ENCODE measurements at regions of chr11 and their contacts with region 1.

Region 1: DNA sequence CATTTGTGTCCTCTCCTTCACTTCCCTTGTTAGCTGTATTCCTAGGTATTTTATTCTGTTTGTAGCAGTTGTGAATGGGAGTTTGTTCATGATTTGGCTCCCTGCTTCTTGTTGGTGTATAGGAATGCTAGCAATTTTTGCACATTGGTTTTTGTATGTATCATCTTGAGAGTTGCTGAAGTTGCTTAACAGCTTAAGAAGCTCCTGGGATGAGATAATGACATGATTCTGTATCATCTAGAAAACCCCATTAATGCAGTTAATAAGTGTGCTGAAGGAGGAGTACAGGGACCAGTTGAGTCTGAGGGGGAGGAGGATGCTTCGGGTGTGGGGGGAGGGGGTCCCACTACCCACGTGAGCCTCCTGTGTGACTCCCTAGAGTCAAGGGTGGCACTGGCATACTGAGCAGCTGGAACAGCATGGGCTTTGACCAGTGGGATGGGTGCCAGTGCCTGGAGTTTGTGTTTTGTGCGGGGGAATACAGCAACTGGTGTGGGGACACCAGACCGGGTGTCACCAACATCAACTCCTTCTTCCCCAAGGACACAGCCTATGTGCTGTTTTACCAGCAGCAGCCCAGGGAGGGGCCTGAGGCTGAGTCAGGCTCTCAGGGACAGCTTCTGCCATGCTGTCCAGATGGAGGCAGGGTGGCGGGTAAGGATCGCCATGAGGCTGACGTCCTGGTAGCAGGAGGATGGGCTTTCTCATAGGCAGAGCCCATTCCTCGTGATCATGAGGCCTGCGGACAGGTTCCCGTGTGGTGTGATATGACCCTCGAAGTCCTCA is 24.1 kb downstream of the USP35 start:
- DNase-seq: no peak
- ATAC-seq: no peak
- H3K4me3 ChIP-seq: no peak overlapping the region
- H3K4me3 Mint-ChIP-seq: no peak overlapping the region
- H3K27ac ChIP-seq: no peak overlapping the region
- H3K27ac Mint-ChIP-seq: no peak overlapping the region
- H3K4me1 ChIP-seq: no peaks in the 10 kb centered on the region
- H3K4me1 Mint-ChIP-seq: peaks cover 12% of the 10 kb centered on the region
- H3K27me3 ChIP-seq: no peaks in the 10 kb centered on the region
- H3K27me3 Mint-ChIP-seq: no peaks in the 10 kb centered on the region
- CTCF ChIP-seq: no peak

Region 2: DNA sequence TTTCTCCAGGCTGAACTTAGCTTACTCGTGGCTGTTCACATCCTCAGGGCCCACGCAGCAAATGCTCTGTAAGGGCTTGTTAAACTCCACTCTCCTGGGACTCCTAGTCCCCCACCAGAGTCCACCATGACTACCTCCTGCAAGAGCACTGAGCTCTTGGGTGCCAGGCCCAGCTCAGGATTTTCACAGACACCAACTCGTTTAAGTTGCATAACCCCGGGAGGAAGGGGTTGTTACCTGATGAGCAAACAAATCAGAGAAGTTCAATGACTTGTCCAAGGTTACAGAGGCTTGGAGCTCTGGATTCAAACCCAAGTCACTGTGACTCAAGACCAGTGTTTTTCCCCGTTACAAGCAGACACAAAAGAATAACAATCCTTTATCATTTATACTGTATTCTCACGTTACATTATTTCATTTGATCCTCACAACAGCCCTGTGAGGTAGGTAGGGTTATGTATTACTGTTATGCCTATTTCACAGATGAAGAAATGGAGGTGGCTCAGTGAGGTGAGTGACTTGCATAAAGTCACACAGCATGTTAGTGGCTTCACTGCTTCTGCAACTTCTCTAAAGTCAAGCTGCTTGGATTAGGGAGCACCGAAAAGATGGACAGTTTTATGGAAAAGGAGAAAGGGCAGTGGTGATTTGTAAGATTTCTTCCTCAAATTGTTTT is 41.8 kb before region 1 on chr11:
- CTCF ChIA-PET with region 1: no interaction called
- POLR2A ChIA-PET with region 1: no interaction called
- intact Hi-C with region 1: loop called in 1 of 2 experiments (anchors 5 kb)
- DNase-seq: no peak
- ATAC-seq: no peak
- H3K4me3 ChIP-seq: no peak overlapping the region
- H3K4me3 Mint-ChIP-seq: no peak overlapping the region
- H3K27ac ChIP-seq: no peak overlapping the region
- H3K27ac Mint-ChIP-seq: no peak overlapping the region
- H3K4me1 ChIP-seq: no peaks in the 10 kb centered on the region
- H3K4me1 Mint-ChIP-seq: no peaks in the 10 kb centered on the region
- H3K27me3 ChIP-seq: no peaks in the 10 kb centered on the region
- H3K27me3 Mint-ChIP-seq: no peaks in the 10 kb centered on the region
- CTCF ChIP-seq: no peak